ENCODE measurements at regions of chrX and their contacts with region 1.

Region 1: GRCh38 chrX:38841750-38842149 is 40.5 kb downstream of the MID1IP1 start:
- DNase-seq: no peak
- H3K4me3 ChIP-seq: no peak overlapping the region
- H3K27ac ChIP-seq: no peak overlapping the region
- H3K4me1 ChIP-seq: no peaks in the 10 kb centered on the region
- H3K27me3 ChIP-seq: no peaks in the 10 kb centered on the region
- CTCF ChIP-seq: no peak

Region 2: GRCh38 chrX:38717871-38718270 is 123.9 kb before region 1 on chrX:
- intact Hi-C with region 1: no loop called
- DNase-seq: no peak
- H3K4me3 ChIP-seq: no peak overlapping the region
- H3K27ac ChIP-seq: no peak overlapping the region
- H3K4me1 ChIP-seq: no peaks in the 10 kb centered on the region
- H3K27me3 ChIP-seq: peaks cover 4% of the 10 kb centered on the region
- CTCF ChIP-seq: peak in 1 of 3 experiments; percentile 22

Region 3: DNA sequence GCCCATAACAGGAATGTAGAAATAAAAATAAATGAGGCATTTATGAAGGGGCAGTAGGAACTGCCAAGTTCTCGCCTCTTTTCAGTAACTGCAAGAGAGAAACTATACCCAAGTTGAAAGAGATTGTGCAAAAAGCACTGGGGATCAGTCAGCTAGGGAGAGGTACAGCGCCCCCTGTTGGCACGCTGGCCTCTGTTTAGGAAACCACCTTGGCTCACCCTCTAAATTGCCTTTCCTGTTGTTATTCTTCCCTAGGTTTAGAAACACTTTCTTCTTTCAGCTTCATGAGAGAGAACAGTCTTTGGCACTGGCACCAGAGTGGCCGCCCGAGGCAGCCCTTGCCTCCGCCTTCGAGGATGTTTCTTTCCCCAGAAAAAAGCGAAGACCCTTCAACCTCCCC is 308.0 kb after region 1 on chrX:
- intact Hi-C with region 1: loop called (anchors 5 kb)
- DNase-seq: peak in 1 of 2 donors; percentile 83
- H3K4me3 ChIP-seq: no peak overlapping the region
- H3K27ac ChIP-seq: no peak overlapping the region
- H3K4me1 ChIP-seq: no peaks in the 10 kb centered on the region
- H3K27me3 ChIP-seq: no peaks in the 10 kb centered on the region
- CTCF ChIP-seq: peak; percentile 59 to 70 (median 65)